CD14-positive monocyte (primary cell): ENCODE measurements at regions of chr1 and their contacts with region 1.

Region 1: GRCh38 chr1:185483664-185484450 is 166.8 kb upstream of the IVNS1ABP start:
- DNase-seq: peak; percentile 64 to 87 (median 85)
- H3K4me3 ChIP-seq: no peak overlapping the region
- H3K4me3 Mint-ChIP-seq: no peak overlapping the region
- H3K27ac ChIP-seq: peak overlapping the region in 1 of 2 donors; percentile 62
- H3K27ac Mint-ChIP-seq: peak overlapping the region; percentile 70 to 94 (median 88)
- H3K4me1 ChIP-seq: peaks cover 25 to 28% of the 10 kb centered on the region in 2 donors
- H3K4me1 Mint-ChIP-seq: peaks cover 28% of the 10 kb centered on the region
- H3K27me3 ChIP-seq: no peaks in the 10 kb centered on the region
- H3K27me3 Mint-ChIP-seq: peaks cover 2 to 6% (median 4%) of the 10 kb centered on the region in 3 donors
- CTCF ChIP-seq: no peak

Region 2: DNA sequence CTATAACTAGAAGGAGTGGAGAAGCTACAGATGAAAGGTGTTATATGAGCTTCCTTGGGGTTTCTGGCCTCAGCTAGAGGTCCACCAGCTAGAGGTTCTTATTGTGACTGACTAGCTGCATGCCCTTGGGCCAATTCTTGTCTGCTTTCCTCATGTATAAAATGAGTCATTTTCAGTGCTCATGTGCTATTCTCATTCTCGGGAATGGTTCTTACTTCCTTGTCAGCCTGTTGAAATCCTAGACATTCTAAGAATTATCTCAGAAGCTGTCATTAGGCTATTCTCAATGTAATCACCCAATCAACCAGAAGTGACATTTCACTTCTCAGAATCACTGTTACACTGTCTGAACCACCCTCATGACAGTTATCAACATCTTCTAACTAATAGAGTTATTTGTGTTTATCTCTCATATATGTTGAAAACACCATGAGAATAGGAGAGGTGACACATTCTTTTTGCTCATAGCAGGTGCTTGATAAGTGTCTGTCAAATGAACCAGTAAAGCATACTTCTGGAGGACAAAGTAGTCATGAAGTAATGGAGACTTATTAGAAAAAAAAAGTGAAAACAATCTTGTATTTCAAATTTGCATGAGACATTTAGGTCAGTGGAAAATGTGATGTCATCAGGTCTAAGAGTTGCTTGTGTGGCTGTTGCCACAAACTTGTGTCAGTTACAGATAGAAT is 44.0 kb before region 1 on chr1:
- intact Hi-C with region 1: no loop called
- DNase-seq: peak; percentile 68 to 91 (median 91)
- H3K4me3 ChIP-seq: no peak overlapping the region
- H3K4me3 Mint-ChIP-seq: no peak overlapping the region
- H3K27ac ChIP-seq: peak overlapping the region in 1 of 2 donors; percentile 56
- H3K27ac Mint-ChIP-seq: no peak overlapping the region
- H3K4me1 ChIP-seq: peaks cover 12 to 18% of the 10 kb centered on the region in 2 donors
- H3K4me1 Mint-ChIP-seq: no peaks in the 10 kb centered on the region
- H3K27me3 ChIP-seq: no peaks in the 10 kb centered on the region
- H3K27me3 Mint-ChIP-seq: peaks cover 0 to 1% (median 1%) of the 10 kb centered on the region in 3 donors
- CTCF ChIP-seq: no peak

Region 3: DNA sequence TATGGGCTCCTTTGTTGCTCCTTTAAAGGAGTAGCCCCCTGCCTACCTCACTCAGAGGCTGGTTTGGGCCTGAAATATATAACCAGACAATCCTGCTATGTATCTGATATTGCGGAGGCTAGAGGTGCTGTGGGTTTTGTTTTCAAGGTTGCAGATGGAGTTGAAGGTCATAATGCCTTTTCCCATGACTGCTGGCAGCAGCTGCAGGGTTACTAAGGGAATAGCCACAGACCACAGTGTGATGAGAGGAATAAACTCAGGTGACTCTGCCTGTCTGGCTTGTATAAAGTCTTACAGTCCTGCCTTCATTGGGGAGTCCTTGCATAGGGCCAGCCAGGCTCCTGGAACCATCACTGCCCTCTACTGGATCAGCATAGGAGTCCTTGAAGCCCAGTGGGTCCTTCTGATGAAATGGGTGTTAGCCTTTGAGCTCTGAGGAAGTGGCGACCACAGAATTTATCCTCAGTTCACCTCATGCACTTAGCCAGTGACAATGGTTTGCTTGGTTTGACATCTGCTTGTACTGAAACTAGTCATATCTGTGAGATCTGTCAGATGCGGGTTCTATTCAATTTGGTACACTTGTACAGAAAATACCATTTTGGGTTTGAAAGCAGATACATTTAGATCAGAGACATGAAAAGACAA is 76.0 kb after region 1 on chr1:
- intact Hi-C with region 1: loop called in 1 of 2 experiments (anchors 10 kb)
- DNase-seq: peak; percentile 73 to 85 (median 82)
- H3K4me3 ChIP-seq: no peak overlapping the region
- H3K4me3 Mint-ChIP-seq: no peak overlapping the region
- H3K27ac ChIP-seq: peak overlapping the region in 1 of 2 donors; percentile 1
- H3K27ac Mint-ChIP-seq: peak overlapping the region in 6 of 7 donors; percentile 14 to 60 (median 44)
- H3K4me1 ChIP-seq: peaks cover 18 to 23% of the 10 kb centered on the region in 2 donors
- H3K4me1 Mint-ChIP-seq: peaks cover 27% of the 10 kb centered on the region
- H3K27me3 ChIP-seq: no peaks in the 10 kb centered on the region
- H3K27me3 Mint-ChIP-seq: no peaks in the 10 kb centered on the region
- CTCF ChIP-seq: peak; percentile 60